ENCODE measurements at regions of chr4 and their contacts with region 1.

Region 1: DNA sequence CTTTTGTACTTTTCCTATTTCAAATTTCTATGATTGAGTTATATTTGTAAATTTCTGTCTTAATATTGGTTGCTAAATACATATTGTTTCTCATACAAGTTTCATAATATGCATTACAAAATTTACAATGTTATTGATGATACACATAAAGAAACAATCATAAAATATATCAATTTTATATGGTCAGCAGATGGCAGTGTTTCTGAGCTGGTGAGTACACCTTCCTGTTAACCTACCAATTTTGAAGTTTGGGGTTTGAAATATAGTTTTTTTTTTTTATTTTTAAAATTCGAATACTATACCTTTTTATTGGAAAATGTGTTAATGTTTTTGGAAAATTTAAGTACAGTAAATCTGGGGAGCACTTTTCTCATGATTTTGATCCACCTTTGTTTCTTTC is 1953.1 kb upstream of the ADGRL3 start:
- DNase-seq: no peak
- ATAC-seq: no peak
- H3K4me3 ChIP-seq: no peak overlapping the region
- H3K27ac ChIP-seq: no peak overlapping the region
- H3K4me1 ChIP-seq: no peaks in the 10 kb centered on the region
- H3K27me3 ChIP-seq: no peaks in the 10 kb centered on the region
- CTCF ChIP-seq: peak in 5 of 9 donors; percentile 10 to 43 (median 34)

Region 2: DNA sequence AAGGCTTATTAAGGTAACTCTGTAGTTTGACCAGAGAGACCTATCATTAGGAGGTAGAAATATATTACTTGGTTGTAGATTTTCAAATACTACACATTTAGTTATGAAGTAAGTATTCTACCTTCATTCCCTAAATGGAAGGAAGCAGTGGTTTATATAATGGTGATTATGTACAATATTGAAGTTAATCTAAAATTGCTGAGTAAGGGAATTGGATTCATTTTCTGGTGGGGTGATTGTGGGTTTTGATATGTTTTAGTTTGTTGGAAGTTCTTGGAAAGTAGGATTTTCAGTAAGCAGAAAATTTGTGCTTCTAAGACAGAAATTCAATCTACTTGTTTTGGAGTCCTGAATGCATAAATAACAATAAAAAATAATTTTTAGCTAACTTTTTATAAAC is 122.2 kb after region 1 on chr4:
- intact Hi-C with region 1: no loop called
- DNase-seq: no peak
- ATAC-seq: no peak
- H3K4me3 ChIP-seq: no peak overlapping the region
- H3K27ac ChIP-seq: no peak overlapping the region
- H3K4me1 ChIP-seq: no peaks in the 10 kb centered on the region
- H3K27me3 ChIP-seq: no peaks in the 10 kb centered on the region
- CTCF ChIP-seq: no peak

Region 3: GRCh38 chr4:60201057-60201673 is 954.1 kb after region 1 on chr4:
- intact Hi-C with region 1: loop called in 2 of 10 experiments (anchors 5 to 10 kb)
- DNase-seq: peak; percentile 13 to 21
- ATAC-seq: peak in 1 of 8 donors; percentile 41
- H3K4me3 ChIP-seq: no peak overlapping the region
- H3K27ac ChIP-seq: no peak overlapping the region
- H3K4me1 ChIP-seq: no peaks in the 10 kb centered on the region
- H3K27me3 ChIP-seq: no peaks in the 10 kb centered on the region
- CTCF ChIP-seq: peak; percentile 56 to 87 (median 83)

Measured in heart right ventricle (tissue), 16 donors.